ENCODE measurements at regions of chr16 and their contacts with region 1.

Region 1: DNA sequence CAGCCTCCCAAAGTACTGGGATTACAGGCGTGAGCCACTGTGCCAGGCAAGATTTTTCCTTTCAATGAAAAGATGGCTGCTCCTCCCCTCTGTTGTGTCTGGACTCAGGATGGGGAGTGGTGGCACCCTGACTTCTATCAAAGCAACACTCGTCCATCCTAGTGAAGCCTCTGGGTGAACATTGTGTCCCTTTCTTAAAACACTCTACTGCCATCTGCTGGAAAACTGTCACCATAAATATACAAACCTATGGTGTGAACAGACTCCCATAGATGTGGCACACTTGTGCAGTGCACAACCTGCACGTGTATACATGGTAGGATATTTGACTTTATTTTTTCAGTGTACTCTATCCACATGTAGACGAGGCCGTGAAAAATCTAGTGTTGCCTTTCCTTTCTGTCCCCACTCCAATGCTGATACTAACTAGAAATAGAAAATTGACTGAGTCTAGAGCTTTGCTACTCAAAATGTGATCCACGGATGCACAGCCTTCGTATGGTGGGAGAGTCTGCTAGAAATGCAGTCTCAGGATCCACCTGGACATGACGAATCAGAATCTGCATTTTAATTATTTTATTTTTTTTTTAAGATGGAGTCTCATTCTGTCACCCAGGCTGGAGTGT is 55.9 kb upstream of the PLCG2 start:
- DNase-seq: peak in 4 of 5 donors; percentile 18 to 67 (median 66)
- H3K4me3 ChIP-seq: no peak overlapping the region
- H3K4me3 Mint-ChIP-seq: peak overlapping the region in 1 of 7 donors; percentile 5
- H3K27ac ChIP-seq: no peak overlapping the region
- H3K27ac Mint-ChIP-seq: peak overlapping the region in 2 of 8 donors; percentile 37 to 59
- H3K4me1 ChIP-seq: peaks cover 5% of the 10 kb centered on the region
- H3K4me1 Mint-ChIP-seq: peaks cover 11 to 22% (median 19%) of the 10 kb centered on the region in 3 donors
- H3K27me3 ChIP-seq: no peaks in the 10 kb centered on the region
- H3K27me3 Mint-ChIP-seq: peaks cover 0 to 3% of the 10 kb centered on the region in 2 donors

Region 2: GRCh38 chr16:81198635-81199034 is 524.6 kb before region 1 on chr16:
- CTCF ChIA-PET with region 1: no interaction called
- POLR2A ChIA-PET with region 1: no interaction called
- DNase-seq: no peak
- H3K4me3 ChIP-seq: no peak overlapping the region
- H3K4me3 Mint-ChIP-seq: no peak overlapping the region
- H3K27ac ChIP-seq: no peak overlapping the region
- H3K27ac Mint-ChIP-seq: no peak overlapping the region
- H3K4me1 ChIP-seq: no peaks in the 10 kb centered on the region
- H3K4me1 Mint-ChIP-seq: no peaks in the 10 kb centered on the region
- H3K27me3 ChIP-seq: no peaks in the 10 kb centered on the region
- H3K27me3 Mint-ChIP-seq: peaks cover 23 to 29% of the 10 kb centered on the region in 2 donors

Region 3: GRCh38 chr16:81366316-81366932 is 356.8 kb before region 1 on chr16:
- CTCF ChIA-PET with region 1: interaction called, 18 read pairs
- POLR2A ChIA-PET with region 1: no interaction called
- DNase-seq: peak in 2 of 5 donors; percentile 31 to 37
- H3K4me3 ChIP-seq: no peak overlapping the region
- H3K4me3 Mint-ChIP-seq: no peak overlapping the region
- H3K27ac ChIP-seq: no peak overlapping the region
- H3K27ac Mint-ChIP-seq: peak overlapping the region in 3 of 8 donors; percentile 24 to 52 (median 38)
- H3K4me1 ChIP-seq: no peaks in the 10 kb centered on the region
- H3K4me1 Mint-ChIP-seq: no peaks in the 10 kb centered on the region
- H3K27me3 ChIP-seq: no peaks in the 10 kb centered on the region
- H3K27me3 Mint-ChIP-seq: no peaks in the 10 kb centered on the region

Region 4: DNA sequence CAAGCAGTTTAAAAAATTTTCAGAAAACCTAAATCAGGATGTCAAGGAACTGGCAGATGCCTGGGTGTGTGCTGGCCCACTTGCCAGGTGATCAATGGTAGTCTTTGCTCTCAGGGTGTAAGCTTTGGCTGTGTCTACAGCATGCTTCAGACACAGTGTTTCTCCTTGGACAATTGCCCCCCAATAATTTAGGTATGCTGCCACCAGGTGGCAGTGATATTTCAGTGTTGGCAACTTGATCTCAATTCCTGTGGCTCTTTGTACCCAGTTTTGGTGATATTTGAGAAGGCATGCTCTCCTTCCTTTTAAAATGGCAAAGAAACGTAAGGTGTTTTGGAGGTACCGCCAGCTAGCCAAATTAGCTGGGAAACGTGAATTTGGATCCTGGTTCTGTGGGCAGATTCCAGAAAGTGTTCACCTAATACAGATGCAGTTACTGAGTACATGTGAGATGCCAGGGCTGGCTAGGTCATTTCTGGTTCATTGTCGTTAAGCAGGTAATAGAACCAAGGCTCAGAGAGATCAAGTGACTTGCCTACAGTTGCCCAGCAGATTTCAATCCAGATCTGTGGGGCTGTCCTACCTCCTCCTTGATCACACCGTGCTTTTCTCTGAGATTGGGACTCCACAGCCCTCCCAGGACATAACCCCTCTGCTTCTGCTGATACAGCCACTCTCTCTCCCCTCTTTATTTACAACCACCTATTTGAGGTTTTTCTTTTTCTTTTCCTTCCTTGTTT is 99.7 kb before region 1 on chr16:
- CTCF ChIA-PET with region 1: interaction called, 33 read pairs
- POLR2A ChIA-PET with region 1: interaction called, 3 read pairs
- DNase-seq: peak; percentile 24 to 70 (median 35)
- H3K4me3 ChIP-seq: no peak overlapping the region
- H3K4me3 Mint-ChIP-seq: no peak overlapping the region
- H3K27ac ChIP-seq: no peak overlapping the region
- H3K27ac Mint-ChIP-seq: peak overlapping the region in 6 of 8 donors; percentile 27 to 80 (median 62)
- H3K4me1 ChIP-seq: peaks cover 12% of the 10 kb centered on the region
- H3K4me1 Mint-ChIP-seq: peaks cover 5 to 19% (median 6%) of the 10 kb centered on the region in 3 donors
- H3K27me3 ChIP-seq: no peaks in the 10 kb centered on the region
- H3K27me3 Mint-ChIP-seq: no peaks in the 10 kb centered on the region

Region 5: GRCh38 chr16:81808933-81809496 is 85.8 kb after region 1 on chr16:
- CTCF ChIA-PET with region 1: no interaction called
- POLR2A ChIA-PET with region 1: no interaction called
- DNase-seq: peak in 1 of 5 donors; percentile 60
- H3K4me3 ChIP-seq: no peak overlapping the region
- H3K4me3 Mint-ChIP-seq: peak overlapping the region in 1 of 7 donors; percentile 10
- H3K27ac ChIP-seq: no peak overlapping the region
- H3K27ac Mint-ChIP-seq: peak overlapping the region; percentile 30 to 94 (median 66)
- H3K4me1 ChIP-seq: peaks cover 5% of the 10 kb centered on the region
- H3K4me1 Mint-ChIP-seq: peaks cover 26 to 64% (median 36%) of the 10 kb centered on the region in 3 donors
- H3K27me3 ChIP-seq: no peaks in the 10 kb centered on the region
- H3K27me3 Mint-ChIP-seq: no peaks in the 10 kb centered on the region

Measured in CD8-positive, alpha-beta memory T cell (primary cell).